HepG2 (cell line): ENCODE measurements at regions of chr13 and their contacts with region 1.

Region 1: GRCh38 chr13:102333320-102334202 is 68.3 kb downstream of the FGF14 start:
- DNase-seq: no peak
- ATAC-seq: no peak
- H3K4me3 ChIP-seq: no peak overlapping the region
- H3K27ac ChIP-seq: no peak overlapping the region
- H3K4me1 ChIP-seq: no peaks in the 10 kb centered on the region
- H3K27me3 ChIP-seq: no peaks in the 10 kb centered on the region
- CTCF ChIP-seq: no peak
- EP300 ChIP-seq: no peak
- POLR2A ChIP-seq: no peak
- RAD21 ChIP-seq: no peak

Region 2: DNA sequence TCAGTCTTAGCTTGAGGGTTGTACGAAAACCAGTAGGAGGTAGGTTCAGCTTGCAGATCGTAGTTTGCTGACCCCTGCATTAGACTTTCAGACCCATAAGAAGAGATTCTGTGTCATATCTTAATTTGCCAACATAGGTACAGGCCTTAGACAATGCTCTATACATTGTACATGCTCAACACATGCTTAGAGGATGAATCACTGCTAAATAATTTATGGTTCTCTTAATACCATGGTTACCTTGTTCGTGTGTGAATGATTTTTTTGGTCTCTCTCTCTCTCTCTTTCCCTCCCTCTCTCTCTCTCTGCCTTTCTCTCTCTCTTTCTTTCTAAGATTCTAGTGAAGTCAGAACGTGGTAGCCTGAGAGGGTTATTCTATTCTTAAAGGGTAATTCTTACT is 44.0 kb before region 1 on chr13:
- CTCF ChIA-PET with region 1: no interaction called
- POLR2A ChIA-PET with region 1: no interaction called
- in situ Hi-C with region 1: no loop called
- intact Hi-C with region 1: loop called (anchors 2 kb)
- DNase-seq: no peak
- ATAC-seq: no peak
- H3K4me3 ChIP-seq: no peak overlapping the region
- H3K27ac ChIP-seq: no peak overlapping the region
- H3K4me1 ChIP-seq: 0 out of 2 replicates have a peak, but pooled peaks cover 7% of the 10 kb centered on the region
- H3K27me3 ChIP-seq: no peaks in the 10 kb centered on the region
- CTCF ChIP-seq: no peak
- EP300 ChIP-seq: no peak
- POLR2A ChIP-seq: no peak
- RAD21 ChIP-seq: no peak